Caco-2 (cell line): ENCODE measurements at regions of chr19 and their contacts with region 1.

Region 1: DNA sequence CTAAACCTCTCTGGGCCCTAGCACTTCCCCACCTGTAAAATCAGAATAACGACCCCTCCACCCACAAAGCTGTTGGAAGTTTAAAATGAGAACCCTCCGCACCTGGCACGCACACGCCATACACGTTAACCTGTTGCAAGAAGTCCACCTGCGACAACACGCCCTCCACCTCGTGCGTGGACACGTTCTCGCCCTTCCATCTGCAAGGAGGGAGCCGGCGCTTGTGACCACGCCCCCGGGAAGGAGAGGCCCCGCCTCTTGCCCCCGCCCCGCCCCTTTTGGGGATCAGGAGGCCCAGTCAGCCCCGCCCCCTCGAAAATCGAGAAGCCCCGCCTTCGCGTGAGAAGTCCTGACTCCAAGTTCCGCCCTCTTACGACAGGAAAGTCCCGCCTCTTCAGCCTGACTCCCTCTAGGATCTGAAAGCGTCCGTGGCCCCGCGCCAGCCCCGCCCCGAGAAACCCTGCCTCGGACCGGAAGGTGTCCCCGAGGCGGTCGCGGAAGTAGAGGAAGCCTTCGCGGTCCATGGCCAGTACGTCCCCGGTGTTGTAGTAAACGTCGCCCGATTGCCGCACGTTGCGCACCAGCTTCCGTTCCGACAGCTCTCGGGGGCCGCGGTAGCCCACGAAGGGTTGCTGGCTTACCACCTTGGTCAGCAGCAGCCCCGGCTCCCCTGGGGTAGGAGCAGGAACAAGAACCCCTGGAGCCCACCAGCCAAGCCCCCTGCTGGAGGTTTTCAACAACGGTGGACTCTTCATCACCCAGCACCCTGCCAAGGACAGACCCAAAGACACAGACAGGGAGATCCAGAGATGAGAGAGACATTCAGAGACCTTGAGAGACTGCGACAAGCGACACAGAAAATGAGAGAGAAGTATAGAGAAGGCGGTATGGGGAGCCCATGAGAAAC is 12.5 kb downstream of the SLC27A5 start:
- DNase-seq: peak; percentile 100
- H3K4me3 ChIP-seq: peak overlapping the region; percentile 69
- H3K4me3 Mint-ChIP-seq: peak overlapping the region; percentile 78
- H3K27ac Mint-ChIP-seq: peak overlapping the region; percentile 73
- H3K4me1 ChIP-seq: peaks cover 8% of the 10 kb centered on the region; the same call in 1 of the 2 replicates
- H3K4me1 Mint-ChIP-seq: peaks cover 7% of the 10 kb centered on the region
- H3K27me3 ChIP-seq: no peaks in the 10 kb centered on the region
- H3K27me3 Mint-ChIP-seq: no peaks in the 10 kb centered on the region
- CTCF ChIP-seq: peak; percentile 39 to 68

Region 2: GRCh38 chr19:58386576-58387337 is 112.5 kb before region 1 on chr19 and contains the start of gene RPS5:
- CTCF ChIA-PET with region 1: no interaction called
- POLR2A ChIA-PET with region 1: no interaction called
- intact Hi-C with region 1: loop called (anchors 2 kb)
- DNase-seq: peak; percentile 97 to 98
- H3K4me3 ChIP-seq: peak within 1 kb of the TSS; percentile 79
- H3K4me3 Mint-ChIP-seq: peak within 1 kb of the TSS; percentile 85
- H3K27ac Mint-ChIP-seq: peak within 1 kb of the TSS; percentile 96
- H3K4me1 ChIP-seq: peaks cover 18% of the 10 kb centered on the region
- H3K4me1 Mint-ChIP-seq: peaks cover 12% of the 10 kb centered on the region
- H3K27me3 ChIP-seq: no peaks in the 10 kb centered on the region
- H3K27me3 Mint-ChIP-seq: no peaks in the 10 kb centered on the region
- CTCF ChIP-seq: no peak
- total RNA-seq, gene RPS5: 1,436 and 1,611 TPM in 2 replicates

Region 3: DNA sequence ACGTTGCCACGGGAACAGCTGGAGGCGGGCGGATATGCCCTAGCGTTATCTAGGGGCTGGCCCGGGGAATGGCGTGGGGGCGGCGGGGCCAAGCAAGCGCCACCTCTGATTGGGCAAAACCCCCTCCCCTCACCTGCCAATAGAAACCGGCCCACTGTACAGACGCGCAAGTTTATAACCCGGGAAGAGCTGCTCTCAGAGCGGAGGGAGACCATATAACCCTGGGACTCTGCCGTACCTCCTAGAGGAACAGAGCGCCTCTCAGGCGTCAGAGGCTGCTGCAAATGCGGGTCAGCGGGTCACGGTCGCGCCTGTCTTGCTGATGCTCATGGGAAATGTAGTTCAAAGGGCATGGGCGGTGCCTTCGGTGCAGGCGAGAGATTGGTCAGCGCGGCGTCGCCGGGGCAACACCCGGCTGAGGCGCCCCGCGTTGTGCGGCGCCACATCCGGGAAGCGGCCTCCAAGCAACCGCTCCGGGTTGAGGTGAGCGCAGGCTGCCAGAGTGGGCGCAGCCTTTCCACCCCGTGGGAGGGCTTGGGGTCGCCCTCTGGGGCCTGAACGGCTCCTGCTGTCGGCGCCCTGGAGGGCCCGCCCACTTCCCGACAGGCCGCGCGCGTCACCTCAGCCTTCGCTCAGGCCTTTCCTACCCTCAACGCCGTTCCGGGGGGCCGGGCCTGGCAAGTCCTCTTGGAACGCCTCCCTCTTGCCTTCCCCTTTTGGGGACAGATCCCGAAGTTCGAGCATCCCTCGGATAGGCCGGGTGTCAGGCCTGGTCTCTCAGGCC is 23.4 kb before region 1 on chr19 and contains the start of gene ZNF446:
- CTCF ChIA-PET with region 1: no interaction called
- POLR2A ChIA-PET with region 1: no interaction called
- intact Hi-C with region 1: loop called (anchors 1 kb)
- DNase-seq: peak; percentile 95 to 97
- H3K4me3 ChIP-seq: peak within 1 kb of the TSS; percentile 71
- H3K4me3 Mint-ChIP-seq: peak within 1 kb of the TSS; percentile 79
- H3K27ac Mint-ChIP-seq: peak within 1 kb of the TSS; percentile 85
- H3K4me1 ChIP-seq: peaks cover 5% of the 10 kb centered on the region; the same call in 1 of the 2 replicates
- H3K4me1 Mint-ChIP-seq: no peaks in the 10 kb centered on the region
- H3K27me3 ChIP-seq: no peaks in the 10 kb centered on the region
- H3K27me3 Mint-ChIP-seq: no peaks in the 10 kb centered on the region
- CTCF ChIP-seq: no peak
- total RNA-seq, gene ZNF446: 8.6 and 9.7 TPM in 2 replicates

Region 4: GRCh38 chr19:58536852-58537798 is 37.9 kb after region 1 on chr19:
- CTCF ChIA-PET with region 1: no interaction called
- POLR2A ChIA-PET with region 1: no interaction called
- intact Hi-C with region 1: no loop called
- DNase-seq: no peak
- H3K4me3 ChIP-seq: no peak overlapping the region
- H3K4me3 Mint-ChIP-seq: peak overlapping the region; percentile 87
- H3K27ac Mint-ChIP-seq: peak overlapping the region; percentile 92
- H3K4me1 ChIP-seq: 0 out of 2 replicates have a peak, but pooled peaks cover 5% of the 10 kb centered on the region
- H3K4me1 Mint-ChIP-seq: peaks cover 7% of the 10 kb centered on the region
- H3K27me3 ChIP-seq: no peaks in the 10 kb centered on the region
- H3K27me3 Mint-ChIP-seq: peaks cover 1% of the 10 kb centered on the region
- CTCF ChIP-seq: no peak

Region 5: DNA sequence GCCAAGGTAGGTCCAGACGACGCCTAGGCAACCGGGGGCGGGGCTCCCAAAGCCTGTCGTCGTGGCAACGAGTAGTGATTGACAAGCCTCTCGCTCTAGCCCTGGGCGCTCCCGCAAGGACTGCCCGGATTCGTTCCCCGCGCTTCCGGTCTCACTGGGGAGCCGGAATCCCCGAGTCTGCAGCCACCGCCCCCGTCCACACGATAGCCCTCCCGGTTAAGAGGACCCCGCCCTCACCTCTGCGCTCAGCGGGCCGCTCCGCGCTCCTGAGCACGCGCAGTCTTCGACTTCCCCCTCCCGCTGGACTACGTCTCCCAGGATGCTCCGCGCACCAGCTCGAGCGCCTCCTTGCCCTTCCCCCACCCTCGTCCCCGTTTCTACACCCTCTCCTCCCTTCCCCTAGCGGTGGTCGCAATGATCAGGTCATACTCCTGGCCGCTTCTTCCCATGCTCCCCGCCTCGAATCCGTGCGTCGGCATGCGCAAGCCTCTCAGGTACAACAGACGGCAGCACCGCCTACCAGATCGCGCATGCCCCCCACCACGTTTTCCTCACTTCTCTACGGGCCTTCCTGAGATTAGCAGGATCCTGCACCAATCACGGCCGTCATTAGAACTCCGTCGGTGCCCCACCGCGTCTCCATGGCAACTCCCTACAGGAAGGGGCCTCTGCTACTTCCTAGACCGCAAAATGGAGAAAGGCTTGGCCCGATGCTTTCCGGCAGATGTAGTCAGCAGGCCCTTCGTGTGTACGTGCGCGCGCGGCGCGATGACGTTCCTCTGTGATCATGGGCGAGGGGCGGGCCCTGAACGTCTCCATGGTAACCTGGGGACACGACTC is 73.8 kb after region 1 on chr19 and contains the start of gene MZF1:
- CTCF ChIA-PET with region 1: no interaction called
- POLR2A ChIA-PET with region 1: no interaction called
- intact Hi-C with region 1: loop called (anchors 1 kb)
- DNase-seq: peak; percentile 99 to 100
- H3K4me3 ChIP-seq: peak within 1 kb of the TSS; percentile 67
- H3K4me3 Mint-ChIP-seq: peak within 1 kb of the TSS; percentile 87
- H3K27ac Mint-ChIP-seq: peak within 1 kb of the TSS; percentile 98
- H3K4me1 ChIP-seq: no peaks in the 10 kb centered on the region
- H3K4me1 Mint-ChIP-seq: peaks cover 17% of the 10 kb centered on the region
- H3K27me3 ChIP-seq: no peaks in the 10 kb centered on the region
- H3K27me3 Mint-ChIP-seq: no peaks in the 10 kb centered on the region
- CTCF ChIP-seq: peak in 1 of 2 experiments; percentile 6
- total RNA-seq, gene MZF1: 20.4 and 25.6 TPM in 2 replicates